SK-N-SH (cell line): ENCODE measurements at regions of chr5 and their contacts with region 1.

Region 1: DNA sequence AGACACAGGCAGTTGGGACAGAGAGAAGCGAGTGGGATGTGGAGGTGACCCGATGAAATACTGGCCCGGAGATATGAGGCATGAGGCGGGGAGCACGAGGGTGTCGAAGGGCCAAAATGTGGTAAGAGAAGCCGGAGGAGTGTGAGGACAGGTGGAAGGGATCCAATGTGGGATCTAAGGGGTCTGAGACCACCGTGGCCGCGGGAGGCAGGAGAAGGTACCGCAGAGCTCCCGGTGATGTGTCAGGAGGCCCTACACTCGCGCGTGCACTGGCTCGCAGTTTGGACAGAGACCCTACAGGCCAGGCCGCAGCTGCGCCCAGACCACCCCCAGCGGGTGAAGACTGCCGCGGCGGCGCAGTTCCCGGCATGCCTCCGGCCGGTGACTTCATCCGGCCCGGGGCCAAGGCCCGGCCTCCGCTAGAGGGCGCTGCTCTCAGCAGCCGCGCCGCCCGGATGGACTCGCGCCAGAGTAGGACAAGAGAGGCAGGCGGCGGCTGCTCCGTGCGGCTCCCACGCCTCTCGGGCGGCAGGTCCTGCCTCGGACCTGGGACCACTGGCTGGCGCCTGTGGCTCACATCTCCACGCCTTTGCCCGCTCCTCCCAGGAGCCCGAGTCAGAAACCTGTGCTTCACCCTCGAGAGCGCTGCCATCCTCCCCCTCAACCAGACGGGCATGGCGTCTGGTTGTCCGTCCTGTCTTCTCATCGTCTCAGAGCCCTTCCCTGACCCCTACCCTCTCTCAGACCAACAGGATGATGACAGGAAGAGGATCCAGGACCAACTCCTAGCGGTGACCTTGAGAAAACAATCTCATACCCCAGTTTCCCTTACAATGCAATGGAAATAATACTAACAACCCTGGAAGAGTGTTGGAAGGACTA is 35.4 kb upstream of the STING1 start:
- DNase-seq: peak; percentile 97
- H3K4me3 ChIP-seq: peak overlapping the region; percentile 40 to 60
- H3K27ac ChIP-seq: peak overlapping the region; percentile 65 to 87
- H3K4me1 ChIP-seq: peaks cover 3 to 8% of the 10 kb centered on the region in 2 experiments; a peak in 1 of 4 replicates
- H3K27me3 ChIP-seq: no peaks in the 10 kb centered on the region
- CTCF ChIP-seq: peak; percentile 79
- EP300 ChIP-seq: peak in 1 of 2 experiments; percentile 48; a peak in 1 of 4 replicates
- RAD21 ChIP-seq: peak; percentile 61

Region 2: DNA sequence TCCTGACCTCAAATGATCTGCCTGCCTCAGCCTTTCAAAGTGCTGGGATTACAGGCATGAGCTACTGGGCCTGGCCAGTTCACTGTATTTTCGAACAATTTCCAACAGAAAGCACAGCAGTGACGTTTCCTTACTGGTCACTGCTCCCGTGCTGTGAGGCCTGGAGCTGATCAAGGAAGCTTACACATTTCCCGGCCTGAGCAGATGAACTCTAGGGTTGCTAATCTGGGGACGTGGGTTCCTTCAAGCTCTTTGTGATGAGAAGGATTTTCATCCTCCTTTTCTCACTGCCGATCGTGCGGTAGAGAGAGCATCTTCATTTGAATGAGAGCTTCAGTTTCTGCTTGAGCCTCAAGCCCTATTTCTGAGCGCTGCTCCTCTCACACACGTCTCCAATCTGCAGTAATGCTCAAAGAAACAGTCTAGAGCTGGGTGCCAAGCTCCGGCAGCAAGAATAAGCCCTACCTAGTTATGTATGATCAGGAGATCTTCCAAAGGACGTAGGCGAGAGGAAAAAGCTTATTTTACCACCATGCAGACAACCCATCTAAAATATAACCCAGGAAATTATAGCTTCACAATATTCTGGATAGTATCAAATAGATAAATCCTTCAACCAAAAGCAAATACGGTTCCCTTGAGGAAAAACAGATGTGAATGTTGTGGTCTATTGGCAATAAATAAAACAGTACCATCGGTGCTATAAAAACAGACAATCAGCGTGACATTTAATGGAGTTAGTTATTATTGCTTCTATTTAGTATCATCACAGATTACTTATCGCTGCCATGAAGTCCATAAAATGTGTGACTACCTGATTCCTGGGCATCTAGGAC is 106.7 kb before region 1 on chr5:
- CTCF ChIA-PET with region 1: interaction called, 26 read pairs
- POLR2A ChIA-PET with region 1: no interaction called
- DNase-seq: no peak
- H3K4me3 ChIP-seq: no peak overlapping the region
- H3K27ac ChIP-seq: peak overlapping the region in 1 of 2 experiments; percentile 47; a peak in 2 of 4 replicates
- H3K4me1 ChIP-seq: peaks cover 0 to 19% of the 10 kb centered on the region in 2 experiments; a peak in 1 of 4 replicates
- H3K27me3 ChIP-seq: no peaks in the 10 kb centered on the region
- CTCF ChIP-seq: no peak
- EP300 ChIP-seq: peak in 1 of 2 experiments; percentile 51; a peak in 1 of 4 replicates
- RAD21 ChIP-seq: no peak

Region 3: GRCh38 chr5:139431706-139432105 is 86.2 kb before region 1 on chr5:
- CTCF ChIA-PET with region 1: interaction called, 324 read pairs
- POLR2A ChIA-PET with region 1: no interaction called
- DNase-seq: no peak
- H3K4me3 ChIP-seq: no peak overlapping the region
- H3K27ac ChIP-seq: no peak overlapping the region
- H3K4me1 ChIP-seq: peaks cover 0 to 2% of the 10 kb centered on the region in 2 experiments; a peak in 1 of 4 replicates
- H3K27me3 ChIP-seq: no peaks in the 10 kb centered on the region
- CTCF ChIP-seq: no peak
- EP300 ChIP-seq: no peak
- RAD21 ChIP-seq: no peak

Region 4: GRCh38 chr5:139439013-139439903 is 78.7 kb before region 1 on chr5 and contains the start of gene DNAJC18:
- CTCF ChIA-PET with region 1: interaction called, 16 read pairs
- POLR2A ChIA-PET with region 1: interaction called, 7 read pairs
- DNase-seq: peak; percentile 95
- H3K4me3 ChIP-seq: peak within 1 kb of the TSS; percentile 69 to 90
- H3K27ac ChIP-seq: peak within 1 kb of the TSS; percentile 88 to 89
- H3K4me1 ChIP-seq: peaks cover 10% of the 10 kb centered on the region in 2 experiments; a peak in 3 of 4 replicates
- H3K27me3 ChIP-seq: no peaks in the 10 kb centered on the region
- CTCF ChIP-seq: no peak
- EP300 ChIP-seq: no peak
- RAD21 ChIP-seq: 0 out of 2 replicates have a peak, but pooled peaks have one; percentile 4
- polyA plus RNA-seq, gene DNAJC18: 7.4 and 10.3 TPM in 2 replicates

Region 5: GRCh38 chr5:139492700-139493192 is 25.2 kb before region 1 on chr5:
- CTCF ChIA-PET with region 1: interaction called, 25 read pairs
- POLR2A ChIA-PET with region 1: no interaction called
- DNase-seq: no peak
- H3K4me3 ChIP-seq: peak overlapping the region; percentile 21 to 22; a peak in 2 of 4 replicates
- H3K27ac ChIP-seq: peak overlapping the region; percentile 68 to 84; a peak in 3 of 4 replicates
- H3K4me1 ChIP-seq: peaks cover 2 to 27% of the 10 kb centered on the region in 2 experiments; a peak in 3 of 4 replicates
- H3K27me3 ChIP-seq: no peaks in the 10 kb centered on the region
- CTCF ChIP-seq: peak; percentile 29; the same call in 1 of the 2 replicates
- EP300 ChIP-seq: no peak; a peak in 2 of 4 replicates
- RAD21 ChIP-seq: no peak

Region 6: DNA sequence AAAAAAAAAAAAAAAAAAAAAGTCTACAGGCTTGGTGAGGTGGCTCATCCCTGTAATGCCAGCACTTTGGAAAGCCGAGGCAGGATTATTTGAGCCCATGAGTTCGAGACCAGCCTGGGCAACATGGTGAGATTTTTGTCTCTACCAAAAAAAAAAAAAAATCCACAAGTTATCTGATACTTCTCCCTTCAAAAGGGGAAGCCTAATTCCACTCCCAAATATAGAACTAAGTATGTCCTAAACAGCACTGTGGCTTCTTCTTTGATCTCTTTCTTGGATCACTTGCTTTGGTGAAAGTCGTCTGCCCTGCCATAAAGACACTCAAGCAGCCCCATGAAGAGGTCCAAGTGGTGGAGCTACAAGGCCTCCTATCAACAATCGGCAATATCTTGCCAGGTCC is 16.5 kb before region 1 on chr5:
- CTCF ChIA-PET with region 1: interaction called, 25 read pairs
- POLR2A ChIA-PET with region 1: no interaction called
- DNase-seq: no peak
- H3K4me3 ChIP-seq: no peak overlapping the region
- H3K27ac ChIP-seq: no peak overlapping the region
- H3K4me1 ChIP-seq: no peaks in the 10 kb centered on the region
- H3K27me3 ChIP-seq: no peaks in the 10 kb centered on the region
- CTCF ChIP-seq: no peak
- EP300 ChIP-seq: no peak
- RAD21 ChIP-seq: no peak